Mammary epithelial cell (primary cell): ENCODE measurements at regions of chr15 and their contacts with region 1.

Region 1: DNA sequence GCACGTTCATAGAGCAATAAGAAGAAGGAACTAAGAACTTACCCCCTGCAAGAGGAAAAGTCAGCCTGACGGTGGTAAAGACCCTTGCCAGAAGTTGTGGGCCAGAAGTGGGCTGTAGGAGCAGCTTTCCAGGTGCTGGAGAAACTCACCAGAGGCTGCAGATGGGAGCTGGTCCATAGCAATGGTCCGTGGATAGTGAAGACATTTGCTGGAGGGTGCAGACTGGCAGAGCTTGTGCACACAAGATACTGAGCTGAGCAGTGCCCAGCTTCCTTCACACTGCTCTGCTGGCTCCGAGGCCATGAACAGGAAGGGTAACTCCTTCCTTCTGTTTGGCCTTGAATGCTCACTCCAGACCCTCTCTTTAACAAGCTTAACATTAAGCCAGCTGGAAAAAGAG is 149.8 kb upstream of the BNIP2 start:
- DNase-seq: no peak
- H3K4me3 ChIP-seq: no peak overlapping the region
- H3K27ac ChIP-seq: no peak overlapping the region
- H3K4me1 ChIP-seq: no peaks in the 10 kb centered on the region
- H3K27me3 ChIP-seq: no peaks in the 10 kb centered on the region
- CTCF ChIP-seq: no peak

Region 2: DNA sequence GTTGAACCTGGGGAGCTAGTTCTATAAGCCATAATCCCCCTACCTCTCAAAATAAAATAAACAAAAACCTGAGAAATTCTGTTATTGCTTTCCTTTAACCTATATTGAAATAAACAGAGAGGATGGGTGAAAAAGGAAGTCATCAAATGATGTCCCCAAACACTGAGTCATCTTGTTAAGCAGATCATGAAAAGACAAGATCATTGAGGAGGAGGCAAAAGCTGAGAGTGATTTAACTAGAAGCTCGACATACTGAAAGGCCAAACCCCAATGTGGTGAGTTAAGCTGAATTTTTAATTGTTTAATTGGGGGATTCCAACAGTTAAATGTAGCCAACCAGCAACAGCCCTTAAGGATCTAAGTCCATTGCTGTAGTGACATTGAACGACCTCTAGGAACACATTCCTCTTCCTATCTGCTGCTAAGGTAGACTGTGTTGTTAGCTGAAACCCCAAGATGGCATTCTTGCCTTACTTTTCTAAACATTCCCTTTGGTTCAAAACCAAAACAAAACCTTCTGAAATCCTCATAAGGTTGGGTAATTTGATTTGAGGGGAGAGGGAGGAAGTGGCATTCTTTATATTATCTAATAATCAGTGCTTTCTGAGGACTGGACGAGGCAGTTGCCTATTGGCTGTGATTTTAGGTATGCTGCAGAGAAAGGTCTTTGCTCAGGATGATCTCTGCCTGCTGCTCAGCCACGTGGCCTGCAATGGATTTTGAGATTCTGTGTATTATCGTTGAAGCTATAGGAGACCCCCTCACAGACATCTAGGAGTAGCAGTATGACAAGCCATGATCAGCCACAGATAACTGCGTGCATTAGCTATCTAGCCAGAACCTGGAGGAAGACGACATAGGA is 87.1 kb before region 1 on chr15:
- CTCF ChIA-PET with region 1: no interaction called
- dilution Hi-C with region 1: loop called (anchors 5 kb)
- in situ Hi-C with region 1: no loop called
- intact Hi-C with region 1: no loop called
- DNase-seq: peak; percentile 41
- H3K4me3 ChIP-seq: no peak overlapping the region
- H3K27ac ChIP-seq: no peak overlapping the region
- H3K4me1 ChIP-seq: no peaks in the 10 kb centered on the region
- H3K27me3 ChIP-seq: no peaks in the 10 kb centered on the region
- CTCF ChIP-seq: peak; percentile 48 to 62

Region 3: DNA sequence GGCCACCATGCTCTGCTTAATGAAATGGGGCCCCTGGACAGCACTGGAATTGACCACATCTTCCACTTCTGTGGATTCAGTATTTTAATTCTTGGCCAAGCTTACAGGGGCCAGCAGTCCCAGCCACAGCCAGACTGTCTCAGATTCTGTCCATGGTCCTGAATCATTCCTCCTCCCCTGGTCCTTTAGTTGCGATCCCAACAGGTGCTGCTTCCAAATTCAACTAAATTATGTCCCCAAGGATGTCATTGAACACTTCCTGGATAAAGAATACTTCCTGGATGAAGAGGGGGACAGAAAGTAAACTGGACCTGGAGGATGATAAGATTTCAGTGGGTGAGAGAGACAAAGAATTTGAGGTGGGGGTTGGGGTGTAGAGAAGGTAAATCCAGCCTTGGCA is 54.1 kb after region 1 on chr15:
- CTCF ChIA-PET with region 1: no interaction called
- dilution Hi-C with region 1: loop called (anchors 5 kb)
- in situ Hi-C with region 1: no loop called
- intact Hi-C with region 1: no loop called
- DNase-seq: peak; percentile 26
- H3K4me3 ChIP-seq: no peak overlapping the region
- H3K27ac ChIP-seq: no peak overlapping the region
- H3K4me1 ChIP-seq: peaks cover 3% of the 10 kb centered on the region
- H3K27me3 ChIP-seq: no peaks in the 10 kb centered on the region
- CTCF ChIP-seq: no peak

Region 4: DNA sequence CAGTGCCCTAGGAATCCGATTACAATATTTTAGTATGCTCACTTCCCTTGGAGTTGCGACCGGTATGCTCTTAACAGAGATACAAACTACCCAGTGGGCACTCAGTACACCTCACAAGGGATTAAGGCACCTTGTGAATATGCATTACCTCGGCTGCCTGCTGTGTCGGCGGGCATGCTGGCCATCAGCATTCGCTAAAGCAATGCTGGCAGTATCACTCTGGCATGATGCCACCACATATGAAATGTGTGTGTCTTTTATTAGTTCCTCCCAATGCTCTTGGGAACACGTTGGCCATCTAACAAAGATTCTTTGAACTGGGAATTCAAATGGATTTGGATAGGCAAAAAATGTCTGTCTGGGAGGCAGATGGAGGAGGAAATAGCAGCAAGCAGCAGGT is 97.8 kb after region 1 on chr15:
- CTCF ChIA-PET with region 1: no interaction called
- dilution Hi-C with region 1: loop called (anchors 5 kb)
- in situ Hi-C with region 1: no loop called
- intact Hi-C with region 1: no loop called
- DNase-seq: no peak
- H3K4me3 ChIP-seq: no peak overlapping the region
- H3K27ac ChIP-seq: no peak overlapping the region
- H3K4me1 ChIP-seq: no peaks in the 10 kb centered on the region
- H3K27me3 ChIP-seq: peaks cover 7% of the 10 kb centered on the region
- CTCF ChIP-seq: no peak

Region 5: DNA sequence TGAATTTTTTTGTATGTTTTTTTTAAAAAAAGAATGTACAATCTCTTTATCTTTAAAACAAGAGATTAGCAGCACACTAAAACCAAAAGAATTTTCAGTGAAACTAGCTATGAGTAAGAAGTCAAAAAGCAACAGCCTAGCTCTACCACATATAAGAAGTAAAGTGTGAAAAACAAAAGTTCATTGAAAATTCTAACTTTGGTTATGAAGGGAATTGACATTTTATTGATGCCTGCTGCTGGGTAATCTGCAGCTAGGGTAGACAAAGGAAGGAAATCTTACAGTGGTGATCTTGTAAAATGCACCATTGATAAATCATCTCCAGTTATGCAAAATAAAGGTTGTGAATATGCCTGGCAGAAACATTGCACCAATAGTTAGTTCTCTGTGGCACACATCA is 127.4 kb after region 1 on chr15:
- CTCF ChIA-PET with region 1: interaction called, 14 read pairs
- dilution Hi-C with region 1: no loop called
- in situ Hi-C with region 1: no loop called
- intact Hi-C with region 1: no loop called
- DNase-seq: no peak
- H3K4me3 ChIP-seq: no peak overlapping the region
- H3K27ac ChIP-seq: no peak overlapping the region
- H3K4me1 ChIP-seq: no peaks in the 10 kb centered on the region
- H3K27me3 ChIP-seq: peaks cover 3% of the 10 kb centered on the region
- CTCF ChIP-seq: no peak